B cell (primary cell): ENCODE measurements at regions of chr17 and their contacts with region 1.

Region 1: DNA sequence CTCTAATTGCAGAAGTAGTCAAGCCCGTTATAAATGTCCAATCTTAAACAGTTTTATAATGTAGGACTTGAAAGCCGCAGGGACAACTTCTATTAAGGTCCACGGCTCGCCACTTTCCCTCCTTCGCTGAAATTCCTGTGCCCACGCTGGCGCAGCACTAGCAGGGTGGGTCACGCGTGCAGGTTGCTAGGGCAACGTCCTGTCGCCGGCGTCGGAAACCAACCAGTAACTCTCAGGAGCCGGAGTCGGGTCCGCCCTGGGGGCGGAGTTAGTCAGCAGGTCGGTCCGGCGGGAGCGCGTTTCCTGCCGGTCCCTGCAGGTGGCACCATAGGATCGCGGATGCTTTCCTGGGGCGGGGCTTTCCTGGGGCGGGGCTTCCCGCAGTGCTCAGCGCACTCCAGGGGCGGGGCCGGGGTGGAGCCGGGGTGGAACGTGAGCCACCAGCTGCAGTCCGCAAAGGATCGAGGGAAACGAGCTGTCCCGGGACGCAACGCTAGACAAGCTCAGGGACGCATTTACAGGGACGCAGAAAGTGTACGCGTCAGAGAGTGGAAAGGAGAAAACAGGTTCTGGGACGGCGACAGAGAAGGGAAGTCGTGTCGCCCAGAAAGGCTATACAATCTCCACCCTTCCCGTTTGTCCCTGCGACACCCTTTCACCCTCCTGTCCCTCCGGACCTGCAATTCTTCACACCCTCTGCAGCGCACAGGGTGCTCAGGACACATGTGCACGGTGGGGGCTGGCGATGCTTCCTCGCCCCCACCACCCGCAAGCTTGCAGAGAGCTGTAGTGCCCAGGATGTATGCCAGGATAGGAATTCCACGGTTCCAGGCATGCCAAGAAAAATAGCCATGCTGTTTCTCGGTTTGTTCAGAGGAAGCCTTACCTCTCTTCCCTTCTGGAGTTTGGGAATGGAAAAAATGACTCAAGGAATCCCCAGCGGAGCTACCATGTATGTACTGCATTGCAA is 12.4 kb downstream of the COPZ2 start:
- DNase-seq: peak; percentile 97
- ATAC-seq: peak; percentile 89
- H3K4me3 ChIP-seq: peak overlapping the region; percentile 40 to 76 (median 69)
- H3K4me3 Mint-ChIP-seq: peak overlapping the region; percentile 82
- H3K27ac ChIP-seq: peak overlapping the region; percentile 38 to 55
- H3K27ac Mint-ChIP-seq: peak overlapping the region; percentile 87
- H3K4me1 ChIP-seq: peaks cover 32 to 36% of the 10 kb centered on the region in 2 donors
- H3K4me1 Mint-ChIP-seq: peaks cover 35% of the 10 kb centered on the region
- H3K27me3 ChIP-seq: peaks cover 0 to 45% (median 15%) of the 10 kb centered on the region in 4 experiments
- H3K27me3 Mint-ChIP-seq: peaks cover 19% of the 10 kb centered on the region
- CTCF ChIP-seq: peak; percentile 68

Region 2: DNA sequence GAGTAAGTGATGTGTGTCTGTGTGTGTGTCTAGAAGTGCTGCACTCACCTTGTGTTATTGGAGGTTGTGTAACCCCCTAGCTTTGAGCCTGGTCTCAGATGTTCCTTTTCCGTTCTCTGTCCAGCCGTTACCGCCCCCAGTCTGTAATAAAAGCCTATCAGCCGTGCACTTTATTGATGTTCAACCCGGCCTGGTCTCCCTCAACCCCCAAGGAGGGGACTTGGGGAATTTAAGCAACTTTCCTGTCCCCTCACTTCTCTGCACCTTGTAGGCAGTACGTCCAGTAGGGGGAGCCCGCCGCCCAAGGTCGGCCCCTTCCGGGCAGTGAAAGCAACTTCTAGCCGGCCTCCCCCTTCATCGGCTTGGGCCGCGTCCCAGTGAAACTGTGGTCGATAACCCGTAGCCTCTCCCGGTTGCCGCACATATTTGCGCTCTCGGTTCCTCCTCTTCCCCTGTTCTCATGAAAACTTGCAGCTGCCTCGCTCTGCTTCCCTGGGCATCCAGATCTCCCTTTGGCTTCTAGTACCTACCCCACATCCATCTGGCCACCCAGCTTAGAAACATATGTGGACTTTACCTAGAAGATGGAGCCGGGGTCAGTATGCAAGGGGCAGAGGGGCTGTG is 76.0 kb before region 1 on chr17:
- CTCF ChIA-PET with region 1: interaction called, 54 read pairs
- POLR2A ChIA-PET with region 1: no interaction called
- intact Hi-C with region 1: loop called (anchors 2 kb)
- DNase-seq: peak; percentile 80
- ATAC-seq: peak; percentile 81
- H3K4me3 ChIP-seq: peak overlapping the region in 3 of 5 experiments; percentile 31 to 46 (median 38)
- H3K4me3 Mint-ChIP-seq: peak overlapping the region; percentile 78
- H3K27ac ChIP-seq: peak overlapping the region in 1 of 2 donors; percentile 63
- H3K27ac Mint-ChIP-seq: peak overlapping the region; percentile 66
- H3K4me1 ChIP-seq: peaks cover 13 to 23% of the 10 kb centered on the region in 2 donors
- H3K4me1 Mint-ChIP-seq: peaks cover 23% of the 10 kb centered on the region
- H3K27me3 ChIP-seq: no peaks in the 10 kb centered on the region
- H3K27me3 Mint-ChIP-seq: no peaks in the 10 kb centered on the region
- CTCF ChIP-seq: peak; percentile 89

Region 3: DNA sequence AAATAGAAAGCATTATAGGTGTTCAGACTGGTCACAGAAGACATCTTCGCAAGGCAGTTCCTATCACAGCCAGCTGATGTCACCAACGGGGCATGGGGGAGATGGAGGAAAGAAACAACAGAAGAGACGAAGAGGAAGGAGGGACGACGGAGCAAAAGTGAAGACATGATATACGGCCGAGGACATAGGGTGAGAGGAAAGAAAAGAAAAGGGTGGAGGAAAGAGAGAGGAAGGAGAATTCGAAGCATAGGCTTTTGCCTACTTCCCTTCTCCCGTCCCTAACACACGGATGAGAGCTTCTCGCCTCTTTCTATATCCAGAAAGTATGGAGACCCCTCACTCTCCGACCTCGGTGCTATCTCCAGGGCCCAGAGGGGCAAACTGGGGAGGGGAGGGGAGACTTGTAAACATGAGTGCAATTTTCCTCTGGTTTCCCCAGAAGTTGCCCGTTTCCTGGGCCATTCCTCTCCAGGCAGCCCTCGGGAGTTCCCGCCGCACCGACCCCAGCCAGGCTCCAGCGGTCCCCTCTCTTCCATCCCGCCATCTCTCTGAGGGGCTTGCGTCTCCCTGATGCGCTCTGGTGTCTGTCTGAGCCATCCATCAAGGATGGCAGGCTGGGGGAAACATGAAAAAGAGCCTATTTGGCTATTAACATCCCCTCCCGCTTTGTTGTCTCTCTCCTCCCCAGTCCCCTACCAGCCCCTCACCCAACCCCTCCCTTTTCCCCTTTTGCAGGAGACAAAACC is 13.6 kb before region 1 on chr17:
- CTCF ChIA-PET with region 1: interaction called, 11 read pairs
- POLR2A ChIA-PET with region 1: no interaction called
- intact Hi-C with region 1: no loop called
- DNase-seq: peak; percentile 61
- ATAC-seq: peak; percentile 67
- H3K4me3 ChIP-seq: peak overlapping the region; percentile 15 to 72 (median 38)
- H3K4me3 Mint-ChIP-seq: peak overlapping the region; percentile 83
- H3K27ac ChIP-seq: no peak overlapping the region
- H3K27ac Mint-ChIP-seq: peak overlapping the region; percentile 32
- H3K4me1 ChIP-seq: peaks cover 14% of the 10 kb centered on the region in 2 donors
- H3K4me1 Mint-ChIP-seq: peaks cover 17% of the 10 kb centered on the region
- H3K27me3 ChIP-seq: peaks cover 0 to 40% (median 19%) of the 10 kb centered on the region in 4 experiments
- H3K27me3 Mint-ChIP-seq: peaks cover 34% of the 10 kb centered on the region
- CTCF ChIP-seq: peak; percentile 52

Region 4: GRCh38 chr17:48068491-48068961 is 43.3 kb after region 1 on chr17:
- CTCF ChIA-PET with region 1: interaction called, 228 read pairs
- POLR2A ChIA-PET with region 1: no interaction called
- intact Hi-C with region 1: no loop called
- DNase-seq: no peak
- ATAC-seq: peak; percentile 31
- H3K4me3 ChIP-seq: no peak overlapping the region
- H3K4me3 Mint-ChIP-seq: no peak overlapping the region
- H3K27ac ChIP-seq: no peak overlapping the region
- H3K27ac Mint-ChIP-seq: no peak overlapping the region
- H3K4me1 ChIP-seq: no peaks in the 10 kb centered on the region
- H3K4me1 Mint-ChIP-seq: no peaks in the 10 kb centered on the region
- H3K27me3 ChIP-seq: no peaks in the 10 kb centered on the region
- H3K27me3 Mint-ChIP-seq: no peaks in the 10 kb centered on the region
- CTCF ChIP-seq: peak; percentile 30

Region 5: DNA sequence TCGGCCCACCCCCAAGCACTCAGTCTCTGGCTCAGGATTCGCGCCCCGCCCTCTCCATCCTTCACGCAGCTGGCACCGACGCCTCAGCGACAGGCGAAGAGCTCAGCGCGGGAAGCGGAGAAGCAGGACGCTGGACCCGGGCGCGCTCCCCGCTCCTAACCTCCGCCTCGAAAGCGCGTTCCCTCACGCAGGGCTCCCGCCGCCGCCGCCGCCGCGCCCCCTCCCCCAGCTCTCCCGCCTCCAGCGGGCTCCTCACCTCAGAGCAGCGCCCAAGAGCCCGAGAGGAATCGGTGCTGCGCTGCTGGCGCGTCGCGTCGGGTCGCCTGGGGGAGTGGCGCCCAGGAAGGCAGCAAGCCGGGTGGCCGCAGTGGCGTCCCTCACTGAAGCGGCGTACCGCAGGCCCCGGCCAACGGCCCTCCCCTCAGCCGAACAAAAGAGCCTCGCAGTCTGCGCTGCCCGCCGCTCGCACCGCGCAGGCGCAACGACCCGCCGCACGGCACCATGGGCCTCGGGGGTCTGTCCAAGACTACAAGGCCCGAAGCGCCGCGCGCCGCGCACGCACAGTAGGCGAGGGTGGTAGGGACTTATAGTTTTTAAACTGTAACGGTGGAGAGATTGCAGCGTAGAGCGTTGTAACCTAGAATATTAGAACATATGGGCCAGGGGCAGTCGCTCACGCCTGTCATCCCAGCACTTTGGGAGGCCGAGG is 75.9 kb after region 1 on chr17 and contains the start of gene CBX1:
- CTCF ChIA-PET with region 1: interaction called, 15 read pairs
- POLR2A ChIA-PET with region 1: no interaction called
- intact Hi-C with region 1: loop called (anchors 1 kb)
- DNase-seq: peak; percentile 94
- ATAC-seq: peak; percentile 94
- H3K4me3 ChIP-seq: peak within 1 kb of the TSS; percentile 68 to 85 (median 77)
- H3K4me3 Mint-ChIP-seq: peak within 1 kb of the TSS; percentile 91
- H3K27ac ChIP-seq: peak within 1 kb of the TSS; percentile 72 to 76
- H3K27ac Mint-ChIP-seq: peak within 1 kb of the TSS; percentile 93
- H3K4me1 ChIP-seq: peaks cover 18 to 28% of the 10 kb centered on the region in 2 donors
- H3K4me1 Mint-ChIP-seq: peaks cover 41% of the 10 kb centered on the region
- H3K27me3 ChIP-seq: no peaks in the 10 kb centered on the region
- H3K27me3 Mint-ChIP-seq: no peaks in the 10 kb centered on the region
- CTCF ChIP-seq: no peak
- total RNA-seq, gene CBX1: 29.7 and 33.1 TPM in 2 replicates

Region 6: DNA sequence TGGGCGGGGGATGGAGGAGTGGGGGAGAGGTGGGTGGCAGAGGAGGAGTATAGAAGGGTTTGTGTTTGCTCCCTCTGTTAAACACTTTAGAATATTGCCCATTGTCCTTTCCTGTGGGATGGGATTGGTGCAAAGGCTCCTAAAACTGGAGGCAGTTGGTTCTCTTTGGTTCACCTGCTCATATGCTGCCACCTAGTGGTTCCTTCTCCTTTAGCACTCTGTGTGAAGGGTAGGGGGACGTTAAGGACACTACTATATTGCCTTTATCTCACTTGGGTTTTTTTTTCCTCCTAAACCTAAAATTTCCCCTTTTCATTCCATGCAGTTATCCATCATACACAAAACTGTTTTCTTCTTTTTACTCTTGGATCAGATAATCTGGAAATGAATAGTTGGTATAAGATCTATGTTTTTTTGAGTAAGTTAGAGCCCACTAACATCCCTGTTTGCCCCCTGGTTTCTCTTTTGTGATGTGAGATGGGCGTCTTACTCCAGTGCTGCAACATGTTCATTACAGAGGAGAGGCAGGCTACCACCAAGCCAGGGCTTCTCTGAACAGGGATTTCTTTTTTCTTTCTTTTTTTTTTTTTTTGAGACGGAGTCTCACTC is 106.1 kb after region 1 on chr17:
- CTCF ChIA-PET with region 1: interaction called, 41 read pairs
- POLR2A ChIA-PET with region 1: no interaction called
- intact Hi-C with region 1: loop called (anchors 1 kb)
- DNase-seq: peak; percentile 79
- ATAC-seq: peak; percentile 87
- H3K4me3 ChIP-seq: no peak overlapping the region
- H3K4me3 Mint-ChIP-seq: no peak overlapping the region
- H3K27ac ChIP-seq: no peak overlapping the region
- H3K27ac Mint-ChIP-seq: peak overlapping the region; percentile 7
- H3K4me1 ChIP-seq: no peaks in the 10 kb centered on the region
- H3K4me1 Mint-ChIP-seq: peaks cover 3% of the 10 kb centered on the region
- H3K27me3 ChIP-seq: no peaks in the 10 kb centered on the region
- H3K27me3 Mint-ChIP-seq: no peaks in the 10 kb centered on the region
- CTCF ChIP-seq: peak; percentile 90

Region 7: DNA sequence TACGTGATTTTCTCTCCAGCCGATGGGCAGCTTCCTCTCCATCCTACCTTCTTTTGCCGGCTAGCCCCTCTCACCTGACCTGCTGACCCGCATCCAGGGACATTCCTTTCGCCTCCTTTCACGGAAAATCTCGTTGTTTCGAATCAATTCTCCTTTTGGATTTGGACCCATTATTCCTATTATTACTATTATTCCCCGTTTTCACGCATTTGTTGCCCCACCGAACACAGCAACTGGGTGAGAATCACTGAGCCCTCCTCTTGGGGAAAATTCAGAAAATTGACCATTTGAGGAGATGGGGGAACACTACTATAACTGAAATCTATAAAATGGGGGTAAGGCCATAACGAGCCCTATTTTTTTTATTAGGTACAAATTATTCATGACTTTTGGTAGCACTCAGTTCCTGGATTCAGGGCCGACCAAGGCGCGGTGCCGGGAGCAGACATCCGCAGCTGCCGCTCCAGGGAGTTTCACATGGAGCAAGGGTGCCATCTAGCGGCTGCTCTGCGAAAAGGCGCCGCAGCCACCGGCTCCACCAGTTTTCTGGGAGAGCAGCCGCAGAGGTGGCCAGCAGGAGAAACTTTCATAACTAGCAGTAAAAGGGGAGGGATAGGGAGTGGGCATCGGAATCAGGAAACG is 593.2 kb after region 1 on chr17:
- CTCF ChIA-PET with region 1: interaction called, 8 read pairs
- POLR2A ChIA-PET with region 1: no interaction called
- intact Hi-C with region 1: loop called (anchors 1 kb)
- DNase-seq: peak; percentile 87
- ATAC-seq: peak; percentile 71
- H3K4me3 ChIP-seq: no peak overlapping the region
- H3K4me3 Mint-ChIP-seq: no peak overlapping the region
- H3K27ac ChIP-seq: no peak overlapping the region
- H3K27ac Mint-ChIP-seq: peak overlapping the region; percentile 74
- H3K4me1 ChIP-seq: peaks cover 33 to 51% of the 10 kb centered on the region in 2 donors
- H3K4me1 Mint-ChIP-seq: peaks cover 28% of the 10 kb centered on the region
- H3K27me3 ChIP-seq: peaks cover 0 to 97% (median 72%) of the 10 kb centered on the region in 4 experiments
- H3K27me3 Mint-ChIP-seq: peaks cover 86% of the 10 kb centered on the region
- CTCF ChIP-seq: peak; percentile 97

Region 8: GRCh38 chr17:48630925-48631692 is 605.9 kb after region 1 on chr17:
- CTCF ChIA-PET with region 1: no interaction called
- POLR2A ChIA-PET with region 1: no interaction called
- intact Hi-C with region 1: no loop called
- DNase-seq: no peak
- ATAC-seq: no peak
- H3K4me3 ChIP-seq: no peak overlapping the region
- H3K4me3 Mint-ChIP-seq: no peak overlapping the region
- H3K27ac ChIP-seq: no peak overlapping the region
- H3K27ac Mint-ChIP-seq: no peak overlapping the region
- H3K4me1 ChIP-seq: peaks cover 21 to 35% of the 10 kb centered on the region in 2 donors
- H3K4me1 Mint-ChIP-seq: peaks cover 13% of the 10 kb centered on the region
- H3K27me3 ChIP-seq: peaks cover 0 to 97% (median 73%) of the 10 kb centered on the region in 4 experiments
- H3K27me3 Mint-ChIP-seq: peaks cover 85% of the 10 kb centered on the region
- CTCF ChIP-seq: no peak